ENCODE measurements at regions of chr14 and their contacts with region 1.

Region 1: DNA sequence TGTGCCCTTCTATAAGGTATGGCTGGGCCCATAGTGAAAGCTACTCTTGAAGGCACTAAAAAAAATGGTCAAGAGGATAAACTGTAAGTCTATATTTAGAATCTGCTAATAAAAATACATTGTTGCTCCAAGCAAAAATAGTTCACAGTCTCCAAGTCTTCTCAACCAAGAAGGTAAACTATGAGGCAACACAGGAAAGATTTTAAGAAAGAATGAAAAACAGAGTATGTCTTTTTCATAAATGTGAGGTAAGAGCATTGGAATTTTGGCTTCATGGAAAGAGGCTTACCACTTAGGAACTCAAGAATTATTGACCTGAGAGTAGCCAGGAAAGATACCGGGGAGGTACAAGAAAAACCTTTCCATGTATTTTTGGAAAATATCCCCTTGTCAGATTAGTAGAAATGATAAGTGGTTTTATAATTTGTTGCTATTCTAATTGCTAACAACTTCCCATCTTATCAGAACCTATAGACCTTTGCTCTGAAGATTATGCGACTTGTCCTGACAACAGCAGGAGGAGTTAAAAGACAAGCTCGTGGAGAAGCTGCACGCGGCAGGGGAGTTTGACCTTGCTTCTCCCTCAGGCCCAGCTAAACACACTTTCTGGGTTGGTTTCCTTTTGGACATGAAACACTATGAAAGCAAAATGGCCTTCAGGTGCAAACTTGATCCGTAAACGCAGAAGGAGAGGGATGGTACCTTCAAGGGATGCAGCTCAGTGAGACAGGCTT is 238.1 kb downstream of the FOXN3 start:
- DNase-seq: no peak
- ATAC-seq: no peak
- H3K4me3 ChIP-seq: no peak overlapping the region
- H3K4me3 Mint-ChIP-seq: no peak overlapping the region
- H3K27ac ChIP-seq: no peak overlapping the region
- H3K27ac Mint-ChIP-seq: peak overlapping the region in 1 of 2 donors; percentile 62
- H3K4me1 ChIP-seq: peaks cover 0 to 6% of the 10 kb centered on the region in 2 experiments
- H3K4me1 Mint-ChIP-seq: peaks cover 28 to 37% (median 31%) of the 10 kb centered on the region in 3 donors
- H3K27me3 ChIP-seq: no peaks in the 10 kb centered on the region
- H3K27me3 Mint-ChIP-seq: no peaks in the 10 kb centered on the region

Region 2: DNA sequence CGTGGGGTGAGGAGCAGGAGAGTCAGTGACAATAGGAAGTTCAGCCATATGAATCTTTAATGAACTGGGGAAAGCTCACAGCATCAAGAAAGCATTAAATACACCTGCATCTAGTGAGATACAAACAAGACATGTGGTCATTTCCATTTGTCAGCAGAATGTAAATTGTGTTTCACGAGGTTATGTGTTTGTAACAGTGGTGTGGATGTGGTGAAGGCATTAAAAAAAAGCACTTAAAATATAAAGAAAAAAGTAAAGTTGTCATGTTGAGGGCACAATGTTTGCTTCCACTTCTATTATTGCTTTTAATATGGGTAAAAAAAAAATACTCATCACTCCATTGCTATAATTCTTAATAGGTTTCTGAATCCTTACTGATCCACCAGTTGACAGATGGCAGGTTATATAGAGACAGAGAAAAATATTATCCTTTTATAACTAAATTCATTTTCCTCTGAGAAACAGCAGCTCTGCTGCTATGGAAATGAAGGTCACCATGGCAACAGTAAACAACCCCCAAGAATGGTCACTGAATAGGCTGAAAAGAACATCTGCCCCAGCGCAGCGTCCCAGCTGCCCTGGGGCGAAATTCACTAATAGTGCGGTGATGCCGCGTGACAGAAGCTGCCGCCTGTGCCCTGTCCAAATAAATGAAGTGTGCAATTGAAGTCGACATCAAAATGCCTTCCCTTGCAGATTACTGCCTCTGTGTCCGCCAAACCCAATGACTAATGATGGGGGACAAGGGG is 12.0 kb after region 1 on chr14:
- CTCF ChIA-PET with region 1: interaction called, 3 to 11 read pairs
- POLR2A ChIA-PET with region 1: no interaction called
- DNase-seq: no peak
- ATAC-seq: no peak
- H3K4me3 ChIP-seq: no peak overlapping the region
- H3K4me3 Mint-ChIP-seq: no peak overlapping the region
- H3K27ac ChIP-seq: no peak overlapping the region
- H3K27ac Mint-ChIP-seq: no peak overlapping the region
- H3K4me1 ChIP-seq: peaks cover 0 to 3% of the 10 kb centered on the region in 2 experiments
- H3K4me1 Mint-ChIP-seq: peaks cover 17 to 20% (median 19%) of the 10 kb centered on the region in 3 donors
- H3K27me3 ChIP-seq: no peaks in the 10 kb centered on the region
- H3K27me3 Mint-ChIP-seq: no peaks in the 10 kb centered on the region

Region 3: GRCh38 chr14:89314274-89314673 is 135.3 kb after region 1 on chr14:
- CTCF ChIA-PET with region 1: interaction called in 1 of 2 experiments, 11 read pairs
- POLR2A ChIA-PET with region 1: no interaction called
- DNase-seq: no peak
- ATAC-seq: no peak
- H3K4me3 ChIP-seq: no peak overlapping the region
- H3K4me3 Mint-ChIP-seq: no peak overlapping the region
- H3K27ac ChIP-seq: no peak overlapping the region
- H3K27ac Mint-ChIP-seq: no peak overlapping the region
- H3K4me1 ChIP-seq: peaks cover 0 to 3% of the 10 kb centered on the region in 2 experiments
- H3K4me1 Mint-ChIP-seq: peaks cover 45 to 55% (median 52%) of the 10 kb centered on the region in 3 donors
- H3K27me3 ChIP-seq: no peaks in the 10 kb centered on the region
- H3K27me3 Mint-ChIP-seq: no peaks in the 10 kb centered on the region

Region 4: DNA sequence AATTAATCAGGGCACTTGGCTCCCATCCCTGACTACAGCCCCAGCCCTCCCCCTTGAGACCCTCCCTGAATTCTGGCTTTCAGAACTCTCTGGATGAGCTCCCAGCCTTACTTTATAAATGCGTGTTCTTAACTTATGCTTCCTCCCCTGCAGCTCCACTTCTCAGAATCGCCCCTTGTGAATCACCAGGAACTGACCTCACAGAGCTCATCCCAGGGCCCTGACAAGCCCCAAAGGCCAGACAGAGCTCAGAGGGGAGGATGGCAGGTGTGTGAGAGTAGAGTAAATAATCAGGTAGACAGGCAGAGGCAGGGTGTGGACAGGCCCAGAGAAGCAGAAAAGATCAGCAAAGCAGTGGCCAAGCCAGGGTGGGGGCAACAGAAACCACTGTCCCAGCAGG is 306.3 kb after region 1 on chr14:
- CTCF ChIA-PET with region 1: interaction called in 1 of 2 experiments, 17 read pairs
- POLR2A ChIA-PET with region 1: no interaction called
- DNase-seq: no peak
- ATAC-seq: no peak
- H3K4me3 ChIP-seq: no peak overlapping the region
- H3K4me3 Mint-ChIP-seq: no peak overlapping the region
- H3K27ac ChIP-seq: no peak overlapping the region
- H3K27ac Mint-ChIP-seq: peak overlapping the region in 1 of 2 donors; percentile 55
- H3K4me1 ChIP-seq: peaks cover 0 to 4% of the 10 kb centered on the region in 2 experiments
- H3K4me1 Mint-ChIP-seq: peaks cover 28 to 31% (median 30%) of the 10 kb centered on the region in 3 donors
- H3K27me3 ChIP-seq: no peaks in the 10 kb centered on the region
- H3K27me3 Mint-ChIP-seq: no peaks in the 10 kb centered on the region

Region 5: GRCh38 chr14:89702073-89702875 is 523.3 kb after region 1 on chr14:
- CTCF ChIA-PET with region 1: interaction called in 1 of 2 experiments, 10 read pairs
- POLR2A ChIA-PET with region 1: no interaction called
- DNase-seq: no peak
- ATAC-seq: peak in 1 of 4 experiments; percentile 5
- H3K4me3 ChIP-seq: peak overlapping the region; percentile 29 to 54
- H3K4me3 Mint-ChIP-seq: peak overlapping the region; percentile 76 to 82 (median 76)
- H3K27ac ChIP-seq: peak overlapping the region; percentile 58
- H3K27ac Mint-ChIP-seq: peak overlapping the region; percentile 82 to 91
- H3K4me1 ChIP-seq: peaks cover 30 to 35% of the 10 kb centered on the region in 2 experiments
- H3K4me1 Mint-ChIP-seq: peaks cover 42 to 50% (median 49%) of the 10 kb centered on the region in 3 donors
- H3K27me3 ChIP-seq: no peaks in the 10 kb centered on the region
- H3K27me3 Mint-ChIP-seq: no peaks in the 10 kb centered on the region

Measured in T-cell (primary cell).